Activated naive CD4-positive, alpha-beta T cell treated with anti-CD3 and anti-CD28 coated beads for 36 hours (primary cell): ENCODE measurements at regions of chr1 and their contacts with region 1.

Region 1: DNA sequence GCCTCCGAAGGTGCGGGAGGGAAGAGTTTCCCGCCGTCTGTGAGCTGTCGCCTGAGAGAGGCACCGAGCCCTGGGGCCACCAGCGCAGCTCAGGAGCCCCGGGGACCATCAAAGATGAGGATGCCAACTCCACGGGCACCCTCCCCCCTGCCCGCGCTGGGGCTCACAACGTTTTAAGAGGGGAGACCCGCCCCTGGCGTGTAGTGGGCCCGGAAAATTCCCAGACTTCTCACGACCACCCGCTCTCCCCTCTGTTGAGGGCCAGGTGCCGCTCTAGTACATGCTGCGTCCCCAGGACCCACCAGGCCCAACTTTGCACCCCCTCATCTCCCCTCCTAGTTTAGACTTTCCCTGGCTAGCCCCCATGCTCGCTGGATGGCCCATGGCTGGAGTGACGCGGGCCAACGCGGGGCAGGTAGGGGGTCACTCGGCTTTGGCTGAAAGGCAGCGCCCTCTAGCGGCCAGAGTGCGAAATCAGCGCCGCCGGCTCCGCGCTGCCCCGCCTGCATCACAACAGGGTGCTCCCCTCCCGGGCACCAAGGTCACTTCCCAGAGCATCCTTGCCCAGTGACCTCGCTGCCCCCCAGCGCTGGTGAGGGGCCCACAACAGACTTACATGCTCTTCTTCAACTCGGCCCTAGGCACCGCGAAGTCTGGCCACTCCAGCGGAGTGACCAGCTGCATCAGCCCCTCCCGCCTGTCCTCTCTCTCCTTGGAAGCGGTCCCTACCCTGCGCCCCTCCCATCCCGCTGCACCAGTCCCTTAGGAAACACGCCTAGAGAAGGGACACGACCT is 1.8 kb downstream of the CD160 start:
- DNase-seq: peak; percentile 73
- H3K4me3 Mint-ChIP-seq: peak overlapping the region; percentile 54
- H3K27ac Mint-ChIP-seq: no peak overlapping the region
- H3K4me1 Mint-ChIP-seq: peaks cover 11% of the 10 kb centered on the region
- H3K27me3 Mint-ChIP-seq: peaks cover 17% of the 10 kb centered on the region

Region 2: DNA sequence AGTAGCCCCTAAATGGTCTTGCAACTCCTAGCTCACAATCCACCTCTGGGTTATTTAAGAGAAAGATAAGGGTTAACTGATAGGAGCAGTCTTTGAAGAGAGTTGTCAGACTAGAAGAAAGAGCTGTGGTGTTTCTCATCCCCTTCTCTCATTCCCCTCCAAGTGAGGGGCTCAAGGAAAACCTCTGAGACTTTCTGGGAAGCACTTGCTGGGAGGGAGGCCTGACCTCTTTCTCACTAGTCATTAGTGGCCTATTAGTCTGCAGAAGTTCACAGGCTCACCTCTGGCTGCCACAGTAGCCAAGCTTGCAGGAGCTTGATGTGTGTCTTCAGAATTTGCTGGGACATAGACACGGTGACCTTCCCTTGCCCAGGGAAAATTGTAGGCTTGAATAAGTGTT is 119.5 kb before region 1 on chr1:
- CTCF ChIA-PET with region 1: interaction called, 3 read pairs
- intact Hi-C with region 1: loop called (anchors 10 kb)
- DNase-seq: no peak
- H3K4me3 Mint-ChIP-seq: no peak overlapping the region
- H3K27ac Mint-ChIP-seq: no peak overlapping the region
- H3K4me1 Mint-ChIP-seq: no peaks in the 10 kb centered on the region
- H3K27me3 Mint-ChIP-seq: peaks cover 3% of the 10 kb centered on the region

Region 3: GRCh38 chr1:145690624-145691035 is 30.4 kb before region 1 on chr1:
- CTCF ChIA-PET with region 1: interaction called, 26 read pairs
- intact Hi-C with region 1: no loop called
- DNase-seq: peak; percentile 65
- H3K4me3 Mint-ChIP-seq: no peak overlapping the region
- H3K27ac Mint-ChIP-seq: no peak overlapping the region
- H3K4me1 Mint-ChIP-seq: peaks cover 22% of the 10 kb centered on the region
- H3K27me3 Mint-ChIP-seq: no peaks in the 10 kb centered on the region

Region 4: GRCh38 chr1:145733538-145733937 is 12.5 kb after region 1 on chr1:
- CTCF ChIA-PET with region 1: interaction called, 13 read pairs
- intact Hi-C with region 1: no loop called
- DNase-seq: no peak
- H3K4me3 Mint-ChIP-seq: no peak overlapping the region
- H3K27ac Mint-ChIP-seq: no peak overlapping the region
- H3K4me1 Mint-ChIP-seq: no peaks in the 10 kb centered on the region
- H3K27me3 Mint-ChIP-seq: no peaks in the 10 kb centered on the region

Region 5: GRCh38 chr1:145751491-145752037 is 30.5 kb after region 1 on chr1:
- CTCF ChIA-PET with region 1: interaction called, 4 read pairs
- intact Hi-C with region 1: loop called (anchors 5 kb)
- DNase-seq: no peak
- H3K4me3 Mint-ChIP-seq: no peak overlapping the region
- H3K27ac Mint-ChIP-seq: no peak overlapping the region
- H3K4me1 Mint-ChIP-seq: peaks cover 7% of the 10 kb centered on the region
- H3K27me3 Mint-ChIP-seq: no peaks in the 10 kb centered on the region